ENCODE measurements at regions of chr15 and their contacts with region 1.

Region 1: GRCh38 chr15:97909291-97909891 is 51.1 kb upstream of the ARRDC4 start:
- DNase-seq: peak; percentile 67 to 75 (median 73)
- ATAC-seq: peak; percentile 96 to 99 (median 98)
- H3K4me3 ChIP-seq: no peak overlapping the region
- H3K27ac ChIP-seq: no peak overlapping the region
- H3K4me1 ChIP-seq: no peaks in the 10 kb centered on the region
- H3K27me3 ChIP-seq: peaks cover 0 to 7% of the 10 kb centered on the region in 2 donors
- CTCF ChIP-seq: peak; percentile 89 to 97 (median 93)
- POLR2A ChIP-seq: no peak

Region 2: DNA sequence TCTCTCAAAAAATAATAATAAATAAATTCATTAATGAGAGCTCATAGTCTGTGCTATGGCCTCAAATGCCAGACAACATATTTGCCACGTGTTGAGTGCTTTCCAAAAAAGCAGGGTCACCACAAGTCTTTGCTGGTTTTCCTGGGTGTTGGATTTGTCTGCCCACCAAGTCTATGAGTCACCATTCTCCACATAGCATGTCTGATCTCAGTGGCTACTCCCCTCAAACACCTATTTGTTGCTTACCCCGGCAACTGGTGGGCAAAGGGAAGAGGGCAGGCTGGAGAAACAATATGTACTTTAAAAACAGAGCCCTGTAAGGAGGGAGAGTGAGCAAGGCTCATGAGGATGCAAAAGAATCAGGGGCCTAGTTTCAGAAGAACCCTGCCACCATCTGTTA is 68.9 kb before region 1 on chr15:
- intact Hi-C with region 1: no loop called
- DNase-seq: no peak
- ATAC-seq: no peak
- H3K4me3 ChIP-seq: no peak overlapping the region
- H3K27ac ChIP-seq: no peak overlapping the region
- H3K4me1 ChIP-seq: no peaks in the 10 kb centered on the region
- H3K27me3 ChIP-seq: no peaks in the 10 kb centered on the region
- CTCF ChIP-seq: no peak
- POLR2A ChIP-seq: no peak

Region 3: DNA sequence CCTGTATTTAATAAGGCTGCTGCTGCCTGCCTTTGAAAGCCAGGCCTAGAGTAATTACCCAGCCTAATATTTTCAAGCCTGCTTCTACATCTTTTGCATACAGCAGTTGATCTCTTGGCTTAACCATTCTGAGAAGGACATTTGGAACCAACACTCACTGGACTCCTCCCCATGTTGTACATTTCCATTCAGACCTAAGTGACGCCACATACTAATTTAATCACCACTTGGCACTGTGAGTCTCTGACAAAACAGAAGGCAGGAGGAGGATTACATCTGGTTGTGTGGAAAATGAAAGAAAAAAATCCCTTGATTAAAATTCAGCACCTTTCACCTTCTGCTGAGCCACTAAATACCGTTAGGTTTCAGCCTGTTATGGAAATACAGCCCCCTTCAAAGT is 51.1 kb before region 1 on chr15:
- intact Hi-C with region 1: no loop called
- DNase-seq: no peak
- ATAC-seq: no peak
- H3K4me3 ChIP-seq: no peak overlapping the region
- H3K27ac ChIP-seq: no peak overlapping the region
- H3K4me1 ChIP-seq: no peaks in the 10 kb centered on the region
- H3K27me3 ChIP-seq: no peaks in the 10 kb centered on the region
- CTCF ChIP-seq: no peak
- POLR2A ChIP-seq: no peak

Region 4: DNA sequence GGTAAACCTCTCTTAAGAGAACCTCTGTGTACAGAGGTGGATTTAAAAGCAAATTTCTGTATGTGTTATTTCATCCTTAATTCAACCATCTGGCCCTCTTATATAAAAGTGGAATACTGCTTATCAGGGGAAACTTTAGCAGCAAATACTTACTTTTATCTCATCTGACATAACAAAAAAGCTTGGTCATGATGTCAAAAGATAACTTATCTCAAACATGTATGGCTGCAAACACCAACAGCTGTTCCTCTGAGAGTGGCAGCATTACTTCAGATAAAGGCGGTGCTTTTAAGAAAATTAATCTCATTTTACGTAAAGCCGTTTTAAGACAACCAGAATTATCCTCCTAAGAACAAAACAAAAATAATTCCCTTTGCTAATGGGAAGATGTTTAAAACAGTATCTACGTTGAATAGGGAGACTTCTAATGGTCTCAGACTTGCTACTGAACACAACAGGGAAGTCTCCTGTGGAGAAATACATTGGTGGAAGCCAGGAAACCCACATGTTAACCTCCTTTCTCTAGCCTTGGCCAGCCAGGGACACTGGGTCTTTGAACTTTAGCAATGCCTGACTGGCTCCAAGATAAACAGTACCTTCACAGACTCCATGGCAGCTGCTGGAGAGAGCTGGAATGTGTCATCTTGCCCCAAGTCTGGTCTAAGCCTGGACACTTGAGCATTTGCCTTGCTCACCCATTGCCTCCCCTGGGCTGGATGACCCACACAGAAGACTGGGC is 69.2 kb after region 1 on chr15:
- intact Hi-C with region 1: no loop called
- DNase-seq: peak; percentile 63 to 89 (median 81)
- ATAC-seq: peak; percentile 88 to 97 (median 94)
- H3K4me3 ChIP-seq: no peak overlapping the region
- H3K27ac ChIP-seq: peak overlapping the region; percentile 56 to 89 (median 66)
- H3K4me1 ChIP-seq: peaks cover 0 to 37% (median 10%) of the 10 kb centered on the region in 4 donors
- H3K27me3 ChIP-seq: no peaks in the 10 kb centered on the region
- CTCF ChIP-seq: no peak
- POLR2A ChIP-seq: no peak

Region 5: DNA sequence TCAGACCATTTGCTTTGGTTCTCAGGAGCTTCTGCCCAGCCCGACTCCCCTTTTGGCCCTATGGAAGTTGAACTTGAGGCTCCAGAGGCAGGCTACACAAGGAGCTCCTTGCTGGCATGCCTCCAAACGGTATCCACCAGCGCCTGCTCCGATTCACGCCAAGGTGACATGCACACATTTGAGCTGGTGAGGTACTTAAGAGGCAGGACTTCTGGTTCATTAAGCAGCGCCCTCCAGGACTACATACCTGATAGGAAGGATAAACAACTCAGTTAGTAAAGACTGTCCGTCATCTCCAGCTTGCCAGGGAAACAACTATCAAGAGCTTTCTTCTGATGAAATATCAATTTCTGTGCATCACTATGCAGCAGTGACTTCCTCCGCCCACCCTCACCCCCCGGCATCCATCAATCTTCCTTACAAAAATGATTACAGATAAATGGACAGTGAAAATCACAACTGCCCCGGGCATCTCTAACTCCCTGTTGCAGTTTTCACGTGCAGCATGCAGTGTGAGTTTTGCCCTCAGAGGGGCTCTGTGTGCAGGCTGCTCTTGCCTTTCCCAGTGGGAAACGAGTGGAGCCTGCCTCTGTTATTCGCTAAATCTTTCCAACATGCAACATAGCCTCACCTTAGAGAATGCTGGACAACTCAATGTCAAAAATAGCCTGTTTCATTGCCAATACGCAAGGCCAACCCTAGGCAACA is 174.0 kb after region 1 on chr15:
- intact Hi-C with region 1: loop called (anchors 5 kb)
- DNase-seq: no peak
- ATAC-seq: no peak
- H3K4me3 ChIP-seq: no peak overlapping the region
- H3K27ac ChIP-seq: no peak overlapping the region
- H3K4me1 ChIP-seq: no peaks in the 10 kb centered on the region
- H3K27me3 ChIP-seq: no peaks in the 10 kb centered on the region
- CTCF ChIP-seq: no peak
- POLR2A ChIP-seq: no peak

Region 6: GRCh38 chr15:98177924-98178592 is 268.7 kb after region 1 on chr15:
- intact Hi-C with region 1: loop called (anchors 10 kb)
- DNase-seq: no peak
- ATAC-seq: peak; percentile 86 to 97 (median 92)
- H3K4me3 ChIP-seq: no peak overlapping the region
- H3K27ac ChIP-seq: no peak overlapping the region
- H3K4me1 ChIP-seq: no peaks in the 10 kb centered on the region
- H3K27me3 ChIP-seq: peaks cover 0 to 5% of the 10 kb centered on the region in 2 donors
- CTCF ChIP-seq: peak; percentile 63 to 78 (median 66)
- POLR2A ChIP-seq: no peak

Region 7: DNA sequence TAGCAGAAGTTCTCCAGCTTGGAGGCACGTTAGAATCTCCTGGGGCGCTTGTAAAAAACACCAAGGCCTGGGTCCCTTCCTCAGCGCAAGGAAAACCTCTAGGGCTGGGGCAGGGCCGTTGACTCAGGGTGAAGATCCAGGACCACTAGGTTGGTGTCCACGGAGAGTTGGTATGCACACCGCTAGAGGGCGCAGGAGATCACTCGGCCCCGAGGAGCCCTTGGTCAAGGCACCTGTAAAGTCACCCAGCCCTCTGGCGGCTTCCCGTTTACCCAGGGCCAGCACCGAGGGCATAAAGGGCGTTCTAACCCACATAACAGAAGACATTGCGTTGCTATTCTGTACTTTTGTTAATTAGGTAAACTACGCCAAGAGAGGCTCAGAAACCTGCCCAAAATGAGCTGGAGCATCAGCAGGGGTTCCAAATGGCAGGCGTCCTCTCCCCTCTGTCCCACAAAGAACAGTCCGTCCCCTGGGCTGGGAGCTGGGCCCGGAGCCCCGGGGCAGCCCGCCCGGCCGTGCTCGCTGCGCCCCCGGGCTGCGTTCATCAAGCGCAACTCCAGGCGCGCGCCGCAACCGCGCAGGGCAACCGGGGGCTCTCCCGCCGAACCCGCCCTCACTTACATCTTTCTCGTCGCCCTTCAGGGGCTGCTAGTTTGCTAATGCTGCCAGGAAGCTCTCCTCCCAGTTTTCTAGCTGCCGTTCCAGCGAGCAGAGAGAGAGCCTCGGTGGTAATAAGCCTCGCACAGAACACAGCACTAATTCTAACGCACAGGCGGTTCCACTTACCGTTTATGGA is 383.2 kb after region 1 on chr15:
- intact Hi-C with region 1: loop called (anchors 10 kb)
- DNase-seq: peak; percentile 42 to 64 (median 52)
- ATAC-seq: peak; percentile 65 to 83 (median 76)
- H3K4me3 ChIP-seq: no peak overlapping the region
- H3K27ac ChIP-seq: no peak overlapping the region
- H3K4me1 ChIP-seq: no peaks in the 10 kb centered on the region
- H3K27me3 ChIP-seq: no peaks in the 10 kb centered on the region
- CTCF ChIP-seq: peak; percentile 16 to 67 (median 57)
- POLR2A ChIP-seq: no peak